ENCODE measurements at regions of chr15 and their contacts with region 1.

Region 1: GRCh38 chr15:64731012-64731806 is 44.2 kb downstream of the RBPMS2 start:
- DNase-seq: peak; percentile 74
- H3K4me3 Mint-ChIP-seq: no peak overlapping the region
- H3K27ac Mint-ChIP-seq: no peak overlapping the region
- H3K4me1 Mint-ChIP-seq: peaks cover 14% of the 10 kb centered on the region
- H3K27me3 Mint-ChIP-seq: peaks cover 4% of the 10 kb centered on the region

Region 2: DNA sequence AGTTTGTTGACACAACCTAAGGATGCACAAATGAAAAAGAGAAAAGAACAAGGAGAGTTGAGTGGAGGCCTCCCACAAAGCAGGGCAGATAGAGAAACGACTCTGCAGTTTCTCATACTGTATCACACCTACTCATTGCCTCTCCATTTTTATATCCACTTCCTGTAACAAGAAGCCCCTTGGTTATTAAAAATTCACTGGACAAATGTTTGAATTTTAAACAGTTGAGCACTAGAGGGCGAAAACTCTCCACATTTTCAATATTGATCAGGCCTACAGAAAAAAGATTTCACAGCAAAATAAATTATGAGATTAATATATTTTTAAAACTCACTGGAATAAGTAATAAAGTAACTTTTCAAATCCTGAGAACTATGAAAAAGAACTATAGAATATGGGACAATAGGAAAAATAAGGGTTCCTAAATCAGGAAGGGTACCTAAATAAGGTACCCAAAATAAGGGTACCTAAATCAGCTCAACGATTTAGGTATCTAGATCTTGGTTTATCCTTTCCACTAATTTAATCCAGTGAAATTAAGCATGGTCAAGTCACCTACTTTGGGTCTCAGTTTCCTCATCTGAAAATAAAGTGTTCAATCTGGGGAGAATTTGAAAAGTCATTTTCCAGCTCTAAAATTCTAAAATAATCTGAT is 521.4 kb before region 1 on chr15:
- intact Hi-C with region 1: loop called (anchors 5 kb)
- DNase-seq: no peak
- H3K4me3 Mint-ChIP-seq: no peak overlapping the region
- H3K27ac Mint-ChIP-seq: no peak overlapping the region
- H3K4me1 Mint-ChIP-seq: no peaks in the 10 kb centered on the region
- H3K27me3 Mint-ChIP-seq: no peaks in the 10 kb centered on the region

Region 3: GRCh38 chr15:64430000-64430735 is 301.0 kb before region 1 on chr15:
- intact Hi-C with region 1: loop called (anchors 1 kb)
- DNase-seq: peak; percentile 50
- H3K4me3 Mint-ChIP-seq: peak overlapping the region; percentile 72
- H3K27ac Mint-ChIP-seq: peak overlapping the region; percentile 89
- H3K4me1 Mint-ChIP-seq: peaks cover 31% of the 10 kb centered on the region
- H3K27me3 Mint-ChIP-seq: no peaks in the 10 kb centered on the region

Region 4: DNA sequence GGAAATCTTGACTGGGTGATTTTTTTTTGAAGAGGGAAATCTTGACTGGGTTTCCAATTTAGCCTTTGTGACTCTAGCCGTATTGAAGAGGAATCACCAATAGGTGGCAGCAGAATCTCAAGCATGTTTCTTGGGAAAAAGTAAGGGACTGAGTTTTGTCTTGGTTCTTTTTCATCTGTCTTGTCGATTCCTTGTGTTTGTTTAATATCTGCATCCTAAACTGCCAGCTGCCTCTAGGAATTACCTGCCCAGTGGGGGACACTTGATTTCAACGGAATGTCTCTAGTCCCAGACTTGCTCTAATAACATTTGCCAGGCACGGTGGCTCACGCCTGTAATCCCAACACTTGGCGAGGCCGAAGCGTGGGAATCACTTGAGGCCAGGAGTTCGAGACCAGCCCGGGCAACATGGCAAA is 45.0 kb before region 1 on chr15:
- intact Hi-C with region 1: loop called (anchors 1 kb)
- DNase-seq: no peak
- H3K4me3 Mint-ChIP-seq: no peak overlapping the region
- H3K27ac Mint-ChIP-seq: peak overlapping the region; percentile 56
- H3K4me1 Mint-ChIP-seq: no peaks in the 10 kb centered on the region
- H3K27me3 Mint-ChIP-seq: no peaks in the 10 kb centered on the region

Region 5: DNA sequence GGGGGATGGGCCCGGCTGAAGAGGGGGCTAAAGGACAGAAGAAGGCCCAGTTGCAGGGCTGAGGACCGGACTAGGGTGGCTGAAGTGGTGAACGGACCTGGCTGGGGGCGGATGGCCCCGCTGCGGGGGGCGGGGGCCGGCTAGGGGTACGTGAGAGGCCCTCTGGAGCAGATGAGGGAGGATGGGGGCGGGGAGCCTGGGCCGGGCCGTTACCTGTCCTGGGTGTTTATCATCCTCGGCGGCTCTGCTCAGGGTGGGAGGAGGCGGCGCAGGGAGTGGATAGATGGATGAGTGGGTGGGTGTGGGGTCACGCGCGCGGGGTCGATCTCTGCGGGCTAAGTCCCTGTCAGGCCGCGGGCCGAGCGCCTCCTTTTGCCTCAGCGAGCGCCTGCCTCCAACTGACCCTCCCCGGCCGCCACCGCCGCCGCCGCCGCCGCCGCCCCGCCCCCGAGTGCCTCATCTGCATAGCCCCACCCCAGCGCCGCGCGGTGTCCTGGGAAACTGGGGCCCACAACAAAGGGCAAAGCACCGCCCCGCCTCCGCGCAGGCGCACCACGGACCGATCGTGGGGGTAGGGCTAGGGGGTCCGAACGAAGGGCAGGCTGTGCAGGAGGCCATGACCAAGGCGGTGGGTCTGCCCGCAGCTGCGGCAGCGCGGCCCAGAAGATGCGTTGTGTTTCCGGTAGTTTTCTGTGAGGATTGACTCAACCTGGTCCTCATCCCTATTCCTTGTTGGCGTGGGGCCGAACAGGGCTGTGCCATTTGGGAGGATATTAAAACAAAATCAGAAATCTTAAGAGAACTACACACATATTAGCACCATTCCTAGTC is 28.2 kb before region 1 on chr15:
- intact Hi-C with region 1: loop called (anchors 1 kb)
- DNase-seq: peak; percentile 93
- H3K4me3 Mint-ChIP-seq: peak overlapping the region; percentile 82
- H3K27ac Mint-ChIP-seq: peak overlapping the region; percentile 78
- H3K4me1 Mint-ChIP-seq: peaks cover 51% of the 10 kb centered on the region
- H3K27me3 Mint-ChIP-seq: peaks cover under 1% of the 10 kb centered on the region

Region 6: GRCh38 chr15:64809649-64810496 is 78.7 kb after region 1 on chr15:
- intact Hi-C with region 1: loop called (anchors 1 kb)
- DNase-seq: peak; percentile 51
- H3K4me3 Mint-ChIP-seq: no peak overlapping the region
- H3K27ac Mint-ChIP-seq: no peak overlapping the region
- H3K4me1 Mint-ChIP-seq: peaks cover 6% of the 10 kb centered on the region
- H3K27me3 Mint-ChIP-seq: peaks cover 7% of the 10 kb centered on the region

Region 7: DNA sequence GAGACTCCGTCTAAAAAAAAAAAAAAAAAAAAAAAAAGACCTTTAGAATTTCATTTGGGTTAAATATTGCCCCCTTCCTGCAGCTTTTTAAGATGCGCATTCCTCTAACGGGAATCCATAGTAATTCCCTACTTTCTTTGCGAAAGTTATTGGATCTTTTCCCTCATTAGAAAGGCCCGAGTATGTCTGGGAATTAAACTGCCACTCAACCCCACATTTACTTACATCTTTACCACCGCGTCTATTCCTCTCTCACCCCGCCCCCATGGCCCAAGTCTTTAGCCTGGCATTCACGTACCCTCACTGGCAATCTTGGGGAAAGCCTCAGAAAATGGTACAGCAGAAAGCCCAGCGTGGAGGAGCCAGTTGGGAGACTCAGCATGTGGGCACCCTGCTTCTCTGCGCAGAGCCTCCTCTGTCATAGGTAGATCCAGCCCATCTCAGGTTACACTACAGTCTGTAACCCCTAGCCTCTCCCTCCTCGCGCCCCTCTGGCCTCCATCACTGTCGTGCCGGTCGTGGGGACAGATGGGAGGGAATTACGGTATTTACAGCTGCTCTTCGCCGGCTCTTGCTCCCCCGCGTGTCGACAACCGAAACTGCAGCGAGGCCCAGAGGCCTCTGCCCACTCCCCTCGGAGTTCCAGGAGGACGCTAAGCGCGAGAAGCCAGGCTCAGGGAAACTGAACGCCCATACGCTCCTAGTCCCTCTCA is 174.1 kb after region 1 on chr15:
- intact Hi-C with region 1: loop called (anchors 1 kb)
- DNase-seq: peak; percentile 71
- H3K4me3 Mint-ChIP-seq: peak overlapping the region; percentile 79
- H3K27ac Mint-ChIP-seq: peak overlapping the region; percentile 50
- H3K4me1 Mint-ChIP-seq: peaks cover 44% of the 10 kb centered on the region
- H3K27me3 Mint-ChIP-seq: peaks cover 11% of the 10 kb centered on the region